Mammary epithelial cell (primary cell): ENCODE measurements at regions of chr1 and their contacts with region 1.

Region 1: DNA sequence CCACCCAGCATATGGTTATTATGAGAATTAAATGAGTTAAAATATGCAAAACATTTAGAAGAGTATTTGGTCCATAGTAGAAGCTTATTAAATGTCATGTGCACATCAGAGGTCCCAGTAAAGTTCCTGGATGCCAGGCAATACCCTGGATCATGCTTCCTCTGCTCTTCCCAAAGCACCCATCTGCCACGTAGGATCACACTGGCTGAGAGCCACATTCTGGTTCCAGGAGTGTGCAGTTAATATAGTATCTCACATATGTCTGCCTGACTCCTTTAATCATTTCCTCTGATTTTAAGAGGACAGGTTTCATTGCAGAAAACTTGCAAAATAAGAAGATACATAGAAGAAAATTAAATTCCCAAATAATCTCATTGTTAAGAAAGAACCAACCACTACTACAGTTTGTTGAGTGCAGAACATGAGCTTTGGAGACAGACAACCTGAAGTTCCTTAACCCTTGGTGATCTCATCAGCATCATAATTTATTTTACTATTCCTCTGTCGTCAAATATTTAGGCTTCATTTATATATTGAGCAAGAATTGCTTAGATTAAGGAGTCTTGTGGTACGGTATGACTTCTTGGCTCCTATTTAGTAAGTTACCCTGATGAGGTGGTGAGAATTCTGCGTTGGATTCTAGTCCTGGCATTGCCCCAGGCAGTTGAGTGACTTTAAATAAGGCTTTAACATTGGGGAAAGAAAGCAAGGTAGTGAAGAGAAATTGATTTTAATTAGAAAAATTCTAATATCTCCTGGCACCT is 12.3 kb downstream of the SGIP1 start:
- DNase-seq: no peak
- H3K4me3 ChIP-seq: no peak overlapping the region
- H3K27ac ChIP-seq: no peak overlapping the region
- H3K4me1 ChIP-seq: peaks cover 8% of the 10 kb centered on the region
- H3K27me3 ChIP-seq: no peaks in the 10 kb centered on the region
- CTCF ChIP-seq: no peak

Region 2: GRCh38 chr1:66464802-66465201 is 81.4 kb before region 1 on chr1:
- CTCF ChIA-PET with region 1: no interaction called
- dilution Hi-C with region 1: loop called (anchors 5 kb)
- in situ Hi-C with region 1: no loop called
- intact Hi-C with region 1: no loop called
- DNase-seq: peak; percentile 93
- H3K4me3 ChIP-seq: no peak overlapping the region
- H3K27ac ChIP-seq: peak overlapping the region; percentile 57
- H3K4me1 ChIP-seq: peaks cover 12% of the 10 kb centered on the region
- H3K27me3 ChIP-seq: no peaks in the 10 kb centered on the region
- CTCF ChIP-seq: no peak

Region 3: DNA sequence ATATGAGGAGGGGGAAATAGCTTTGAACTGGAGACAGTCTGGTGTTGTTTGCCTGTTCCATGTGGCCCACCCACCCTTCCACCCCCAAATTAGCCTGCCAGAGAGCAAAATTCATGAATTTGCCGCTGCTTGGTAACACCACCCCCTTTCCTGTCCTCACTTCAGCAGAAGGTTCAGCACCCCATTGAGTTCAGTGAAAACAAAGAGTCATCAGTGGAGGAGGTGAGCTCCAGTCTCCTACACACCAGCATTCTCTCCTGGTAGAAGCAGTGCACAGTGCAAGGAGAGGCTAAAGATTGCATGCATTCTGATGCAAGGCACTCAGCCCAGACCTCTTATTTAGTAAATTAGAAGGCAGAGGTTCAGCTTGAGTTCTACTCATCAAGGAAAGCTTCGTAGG is 106.3 kb after region 1 on chr1:
- CTCF ChIA-PET with region 1: no interaction called
- dilution Hi-C with region 1: no loop called
- in situ Hi-C with region 1: no loop called
- intact Hi-C with region 1: no loop called
- DNase-seq: no peak
- H3K4me3 ChIP-seq: no peak overlapping the region
- H3K27ac ChIP-seq: no peak overlapping the region
- H3K4me1 ChIP-seq: no peaks in the 10 kb centered on the region
- H3K27me3 ChIP-seq: no peaks in the 10 kb centered on the region
- CTCF ChIP-seq: no peak